HepG2 (cell line): ENCODE measurements at regions of chr20 and their contacts with region 1.

Region 1: DNA sequence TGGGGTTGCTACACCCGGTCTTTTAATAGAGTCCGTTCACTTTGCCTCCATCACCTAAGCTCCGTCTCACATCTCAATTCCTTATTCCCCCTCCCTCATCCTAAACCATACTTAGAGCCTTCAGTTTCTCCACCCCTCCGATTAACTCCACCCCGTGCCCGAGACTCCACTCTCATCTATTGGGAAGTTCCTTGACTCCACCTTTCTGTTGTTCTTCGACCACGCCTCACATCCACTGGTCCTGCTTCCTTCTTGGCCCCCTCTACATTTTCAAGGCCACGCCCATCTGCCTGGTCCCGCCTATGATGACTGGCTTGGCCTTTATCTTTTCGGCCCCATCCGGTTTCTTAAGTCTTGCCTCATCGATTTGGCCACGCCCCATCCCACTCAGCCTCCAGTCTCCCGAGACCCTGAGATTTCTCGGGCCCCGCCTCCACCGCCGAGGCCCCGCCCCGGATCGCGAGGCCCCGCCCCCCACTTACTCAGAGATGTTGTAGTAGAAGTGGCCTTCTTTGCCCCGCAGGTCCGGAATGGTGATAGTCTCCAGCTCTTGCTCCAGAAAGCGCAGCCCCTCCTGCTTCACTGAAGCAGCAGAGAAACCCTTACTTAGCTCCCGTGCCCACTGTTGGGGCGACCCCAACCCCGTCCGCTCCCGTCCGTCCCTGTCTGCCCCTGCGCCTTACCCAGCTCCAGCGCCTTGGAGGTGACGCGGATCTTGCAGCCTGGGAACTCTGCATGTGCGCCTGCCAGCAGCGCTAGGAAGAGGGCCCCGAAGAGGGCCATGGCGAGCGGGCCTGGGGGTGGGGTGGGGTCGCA is 1.1 kb downstream of the PLTP start:
- DNase-seq: no peak
- ATAC-seq: no peak
- H3K4me3 ChIP-seq: peak overlapping the region in 1 of 3 experiments; percentile 66; a peak in 1 of 6 replicates
- H3K27ac ChIP-seq: no peak overlapping the region
- H3K4me1 ChIP-seq: peaks cover 56% of the 10 kb centered on the region
- H3K27me3 ChIP-seq: peaks cover 0 to under 1% of the 10 kb centered on the region in 2 experiments; a peak in 2 of 5 replicates
- CTCF ChIP-seq: no peak
- EP300 ChIP-seq: no peak
- POLR2A ChIP-seq: no peak
- RAD21 ChIP-seq: no peak

Region 2: DNA sequence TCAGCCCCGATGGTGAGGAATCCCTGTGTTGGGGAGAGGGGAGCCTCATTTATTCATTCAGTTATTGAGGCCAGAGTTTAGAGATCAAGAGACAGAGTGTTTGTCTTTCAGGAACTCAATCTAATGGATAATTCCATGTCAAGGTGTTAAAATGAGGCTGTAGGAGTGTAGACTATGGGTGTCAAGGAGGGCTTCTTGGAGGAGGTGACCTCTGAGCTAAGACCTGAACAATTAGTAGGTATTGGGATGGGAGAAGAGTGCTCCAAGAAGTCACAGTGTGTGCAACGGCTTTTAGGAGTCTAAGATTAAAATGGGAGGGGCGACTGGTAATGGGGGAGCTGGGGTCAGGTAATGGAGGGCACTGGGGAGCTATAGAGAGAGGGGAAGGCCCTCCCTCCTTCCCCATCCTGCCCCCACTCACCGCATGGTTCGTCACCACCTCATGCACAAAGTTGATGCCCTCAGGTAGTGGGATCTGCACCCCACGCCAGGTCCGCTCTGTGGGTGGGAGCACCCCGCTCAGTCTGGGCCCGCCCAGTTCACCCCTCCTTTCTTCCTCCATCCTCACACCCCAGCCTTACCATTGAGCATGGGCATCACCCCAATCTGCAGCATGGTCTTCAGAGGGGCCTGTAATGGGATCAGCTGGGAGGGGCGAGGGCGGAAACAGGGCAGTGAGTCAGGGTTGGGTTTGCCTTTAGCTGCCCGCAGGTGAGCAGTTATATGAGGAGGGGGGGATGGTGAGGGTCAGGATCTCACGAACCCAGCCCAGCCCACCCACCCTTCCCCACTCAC is 11.6 kb before region 1 on chr20:
- CTCF ChIA-PET with region 1: no interaction called
- POLR2A ChIA-PET with region 1: interaction called, 164 read pairs
- in situ Hi-C with region 1: no loop called
- intact Hi-C with region 1: no loop called
- DNase-seq: no peak
- ATAC-seq: no peak
- H3K4me3 ChIP-seq: no peak overlapping the region
- H3K27ac ChIP-seq: no peak overlapping the region
- H3K4me1 ChIP-seq: peaks cover 9% of the 10 kb centered on the region
- H3K27me3 ChIP-seq: no peaks in the 10 kb centered on the region
- CTCF ChIP-seq: no peak
- EP300 ChIP-seq: no peak
- POLR2A ChIP-seq: peak in 1 of 2 experiments; percentile 37; a peak in 1 of 4 replicates
- RAD21 ChIP-seq: no peak